Panc1 (cell line): ENCODE measurements at regions of chrX and their contacts with region 1.

Region 1: DNA sequence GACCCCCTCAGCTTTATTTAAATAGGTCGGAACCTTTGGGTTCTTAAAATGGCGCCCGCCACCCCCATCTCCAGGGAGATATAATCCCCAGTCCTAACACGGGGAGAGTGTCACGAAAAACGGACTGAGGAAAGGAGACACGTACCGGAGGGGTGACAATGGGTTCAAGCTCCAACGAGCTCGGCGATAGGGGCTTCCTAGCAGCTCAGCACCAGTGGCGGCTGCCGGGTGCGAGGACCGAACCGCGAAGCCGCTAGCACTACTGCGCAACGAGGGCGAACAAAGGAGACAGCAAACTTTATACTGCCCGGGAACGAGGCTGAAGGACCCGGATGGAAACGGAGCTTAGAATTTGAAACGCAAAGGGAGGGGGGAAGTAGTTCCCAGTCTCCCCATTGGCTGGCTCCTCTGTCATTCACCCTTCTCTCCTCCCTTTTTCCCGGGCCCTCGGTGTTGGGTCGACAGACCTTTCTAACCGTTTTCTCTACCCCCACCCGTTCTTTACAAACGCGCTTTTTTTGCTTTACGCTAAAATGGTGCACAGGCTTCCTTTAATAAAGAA is at the start of gene RBMX:
- DNase-seq: peak; percentile 88
- ATAC-seq: peak; percentile 97
- H3K4me3 ChIP-seq: peak within 1 kb of the TSS; percentile 98 to 99
- H3K27ac ChIP-seq: peak within 1 kb of the TSS; percentile 98
- H3K4me1 ChIP-seq: peaks cover 11% of the 10 kb centered on the region
- H3K27me3 ChIP-seq: no peaks in the 10 kb centered on the region
- CTCF ChIP-seq: no peak
- total RNA-seq, gene RBMX: 239 TPM

Region 2: GRCh38 chrX:135557344-135557743 is 1323.2 kb before region 1 on chrX:
- CTCF ChIA-PET with region 1: no interaction called
- POLR2A ChIA-PET with region 1: no interaction called
- in situ Hi-C with region 1: no loop called
- intact Hi-C with region 1: no loop called
- DNase-seq: no peak
- ATAC-seq: no peak
- H3K4me3 ChIP-seq: no peak overlapping the region
- H3K27ac ChIP-seq: no peak overlapping the region
- H3K4me1 ChIP-seq: no peaks in the 10 kb centered on the region
- H3K27me3 ChIP-seq: no peaks in the 10 kb centered on the region
- CTCF ChIP-seq: no peak

Region 3: GRCh38 chrX:136866337-136867095 is 14.0 kb before region 1 on chrX:
- CTCF ChIA-PET with region 1: no interaction called
- POLR2A ChIA-PET with region 1: interaction called, 22 read pairs
- in situ Hi-C with region 1: no loop called
- intact Hi-C with region 1: no loop called
- DNase-seq: no peak
- ATAC-seq: 0 out of 2 replicates have a peak, but pooled peaks have one; percentile 29
- H3K4me3 ChIP-seq: no peak overlapping the region
- H3K27ac ChIP-seq: no peak overlapping the region
- H3K4me1 ChIP-seq: no peaks in the 10 kb centered on the region
- H3K27me3 ChIP-seq: no peaks in the 10 kb centered on the region
- CTCF ChIP-seq: no peak

Region 4: DNA sequence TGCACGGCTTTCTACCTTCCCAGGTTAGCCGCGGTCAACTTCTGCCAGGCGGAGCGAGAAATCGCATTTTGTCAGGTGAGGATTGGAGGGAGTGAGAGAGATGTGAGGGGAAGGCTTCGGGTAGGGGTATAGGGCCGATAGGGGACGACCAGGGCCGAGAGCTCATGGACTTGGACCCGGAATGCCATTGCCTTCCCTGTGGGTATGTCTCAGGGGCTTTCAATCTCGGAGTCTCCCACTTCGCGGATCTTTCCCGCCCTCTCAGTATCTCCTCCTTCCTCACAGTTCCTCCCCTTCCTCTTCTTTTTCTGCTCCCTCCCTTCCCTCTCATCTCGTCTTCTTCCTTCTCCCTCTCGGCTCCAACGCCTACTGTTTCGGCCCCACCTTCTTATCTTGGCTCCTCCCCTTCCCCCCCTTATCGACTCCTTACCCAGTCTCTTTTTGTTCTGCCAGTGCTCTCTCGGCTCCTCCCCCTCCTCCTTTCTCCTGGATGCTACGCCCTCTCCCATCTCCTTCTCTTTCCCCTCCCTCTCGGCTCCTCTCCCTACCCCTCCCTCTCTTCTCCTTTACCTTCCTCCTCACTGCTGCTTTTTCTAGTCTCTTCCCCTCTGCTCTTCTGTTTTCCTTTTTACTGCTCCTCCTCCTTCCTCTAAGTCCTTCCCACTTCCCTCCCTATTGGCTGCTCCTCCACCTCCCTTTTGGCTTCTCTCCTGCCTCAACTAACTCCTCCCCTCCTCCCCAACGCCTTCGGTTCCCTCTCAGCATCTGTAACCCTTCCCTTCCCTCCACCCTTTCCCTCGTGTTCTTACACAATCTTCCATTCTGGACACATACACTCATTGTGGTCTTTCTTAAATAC is 29.4 kb after region 1 on chrX:
- CTCF ChIA-PET with region 1: interaction called, 4 read pairs
- POLR2A ChIA-PET with region 1: interaction called, 8 read pairs
- in situ Hi-C with region 1: no loop called
- intact Hi-C with region 1: loop called (anchors 1 kb)
- DNase-seq: peak; percentile 72
- ATAC-seq: peak; percentile 87
- H3K4me3 ChIP-seq: peak overlapping the region; percentile 89 to 98
- H3K27ac ChIP-seq: peak overlapping the region; percentile 91
- H3K4me1 ChIP-seq: peaks cover 5% of the 10 kb centered on the region
- H3K27me3 ChIP-seq: no peaks in the 10 kb centered on the region
- CTCF ChIP-seq: no peak

Region 5: GRCh38 chrX:136920001-136920400 is 39.5 kb after region 1 on chrX:
- CTCF ChIA-PET with region 1: no interaction called
- POLR2A ChIA-PET with region 1: interaction called, 12 read pairs
- in situ Hi-C with region 1: no loop called
- intact Hi-C with region 1: no loop called
- DNase-seq: no peak
- ATAC-seq: no peak
- H3K4me3 ChIP-seq: no peak overlapping the region
- H3K27ac ChIP-seq: no peak overlapping the region
- H3K4me1 ChIP-seq: no peaks in the 10 kb centered on the region
- H3K27me3 ChIP-seq: no peaks in the 10 kb centered on the region
- CTCF ChIP-seq: no peak

Region 6: DNA sequence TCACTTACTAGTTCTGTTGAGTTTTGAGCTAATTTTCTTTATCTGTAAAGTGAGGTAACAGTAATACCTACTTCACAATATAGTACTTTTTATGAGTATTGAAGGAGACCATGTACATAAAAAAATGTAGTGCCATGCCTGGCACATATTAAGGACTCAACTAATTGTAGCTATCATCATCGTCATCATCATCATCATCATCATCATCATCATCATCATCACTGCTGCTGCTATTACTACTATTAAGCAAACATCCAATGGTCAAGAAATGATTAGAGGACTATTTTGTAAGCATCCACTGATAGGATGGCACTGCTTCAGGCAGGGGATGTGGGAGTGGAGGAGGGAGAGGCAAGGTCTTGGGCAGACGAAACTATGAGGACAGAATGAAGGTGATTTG is 200.7 kb after region 1 on chrX:
- CTCF ChIA-PET with region 1: no interaction called
- POLR2A ChIA-PET with region 1: no interaction called
- in situ Hi-C with region 1: no loop called
- intact Hi-C with region 1: no loop called
- DNase-seq: no peak
- ATAC-seq: no peak
- H3K4me3 ChIP-seq: no peak overlapping the region
- H3K27ac ChIP-seq: no peak overlapping the region
- H3K4me1 ChIP-seq: no peaks in the 10 kb centered on the region
- H3K27me3 ChIP-seq: peaks cover 10% of the 10 kb centered on the region; the same call in 1 of the 2 replicates
- CTCF ChIP-seq: no peak

Region 7: DNA sequence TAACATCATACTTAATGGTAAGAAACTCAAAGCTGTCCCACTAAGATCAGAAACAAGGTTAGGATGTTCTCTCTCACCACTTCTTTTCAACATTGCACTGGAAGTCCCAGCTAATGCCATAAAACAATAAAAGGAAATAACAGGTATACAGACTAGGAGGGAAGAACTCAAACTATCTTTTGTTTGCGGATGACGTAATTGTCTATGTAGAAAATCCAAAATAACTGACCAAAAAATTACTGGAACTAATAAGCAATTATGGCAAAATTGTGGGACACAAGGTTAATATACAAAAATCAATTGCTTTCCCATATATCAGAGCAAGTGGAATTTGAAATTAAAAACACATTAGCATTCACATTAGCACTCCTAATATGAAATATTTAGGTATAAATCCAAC is 257.0 kb after region 1 on chrX:
- CTCF ChIA-PET with region 1: no interaction called
- POLR2A ChIA-PET with region 1: no interaction called
- in situ Hi-C with region 1: no loop called
- intact Hi-C with region 1: no loop called
- DNase-seq: no peak
- ATAC-seq: no peak
- H3K4me3 ChIP-seq: no peak overlapping the region
- H3K27ac ChIP-seq: no peak overlapping the region
- H3K4me1 ChIP-seq: no peaks in the 10 kb centered on the region
- H3K27me3 ChIP-seq: no peaks in the 10 kb centered on the region
- CTCF ChIP-seq: no peak